ENCODE measurements at regions of chr6 and their contacts with region 1.

Region 1: GRCh38 chr6:134436281-134436815 is 118.4 kb upstream of the SGK1 start:
- DNase-seq: peak; percentile 75 to 96
- H3K4me3 ChIP-seq: peak overlapping the region; percentile 36; the same call in 1 of the 2 replicates
- H3K27ac ChIP-seq: peak overlapping the region; percentile 85
- H3K4me1 ChIP-seq: peaks cover 29% of the 10 kb centered on the region
- H3K27me3 ChIP-seq: no peaks in the 10 kb centered on the region
- CTCF ChIP-seq: no peak

Region 2: DNA sequence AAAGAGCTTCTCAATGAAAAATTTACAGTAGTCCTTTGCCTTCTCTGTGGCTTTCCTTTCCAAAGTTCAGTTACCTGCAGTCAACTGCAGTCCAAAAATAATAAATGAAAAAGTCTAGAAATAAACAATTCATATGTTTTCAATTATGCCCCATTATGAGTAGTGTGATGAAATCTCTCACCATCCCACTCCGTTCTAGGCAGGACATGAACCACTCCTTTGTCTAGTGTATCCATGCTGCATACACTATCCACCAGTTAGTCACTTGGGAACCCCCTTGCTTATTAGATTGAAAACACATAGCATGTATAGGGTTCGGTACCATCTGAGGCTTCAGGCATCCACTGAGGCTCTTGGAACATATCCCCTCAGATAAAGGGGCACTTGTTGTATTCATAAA is 1275.8 kb before region 1 on chr6:
- CTCF ChIA-PET with region 1: no interaction called
- POLR2A ChIA-PET with region 1: no interaction called
- intact Hi-C with region 1: no loop called
- DNase-seq: no peak
- H3K4me3 ChIP-seq: no peak overlapping the region
- H3K27ac ChIP-seq: no peak overlapping the region
- H3K4me1 ChIP-seq: no peaks in the 10 kb centered on the region
- H3K27me3 ChIP-seq: no peaks in the 10 kb centered on the region
- CTCF ChIP-seq: no peak

Region 3: GRCh38 chr6:134211297-134211696 is 225.1 kb before region 1 on chr6:
- CTCF ChIA-PET with region 1: no interaction called
- POLR2A ChIA-PET with region 1: no interaction called
- intact Hi-C with region 1: no loop called
- DNase-seq: no peak
- H3K4me3 ChIP-seq: no peak overlapping the region
- H3K27ac ChIP-seq: no peak overlapping the region
- H3K4me1 ChIP-seq: no peaks in the 10 kb centered on the region
- H3K27me3 ChIP-seq: no peaks in the 10 kb centered on the region
- CTCF ChIP-seq: no peak

Region 4: DNA sequence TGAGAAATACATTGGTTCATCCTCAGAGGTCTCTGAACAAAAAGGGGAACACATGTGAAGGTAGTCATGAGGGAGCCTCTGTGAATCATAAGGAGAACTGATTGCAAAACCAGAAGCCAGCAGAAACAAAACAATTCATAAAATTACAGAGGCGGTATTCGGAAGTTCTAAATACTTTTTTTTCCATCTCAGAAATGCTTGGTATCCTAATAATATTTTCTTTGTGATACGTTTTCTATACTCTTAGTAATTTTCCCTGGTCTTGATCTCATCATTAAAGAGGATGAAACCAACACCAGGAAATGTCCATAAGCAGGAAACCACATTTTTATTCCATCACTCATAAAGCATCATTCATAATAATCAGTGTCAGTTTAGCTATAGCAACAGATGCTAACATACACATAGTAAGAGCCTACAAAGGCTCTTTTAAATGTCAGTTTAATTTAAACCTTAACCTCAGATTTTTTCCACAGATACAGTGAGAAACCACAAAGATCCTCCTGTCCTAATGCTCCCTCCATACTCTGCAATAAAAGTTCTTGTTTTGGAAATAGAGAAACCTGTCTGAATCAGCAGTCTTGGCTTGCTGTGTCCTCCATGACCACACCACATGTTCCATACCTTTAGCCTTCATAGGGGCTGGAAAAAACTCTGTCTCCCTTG is 147.7 kb before region 1 on chr6:
- CTCF ChIA-PET with region 1: no interaction called
- POLR2A ChIA-PET with region 1: no interaction called
- intact Hi-C with region 1: loop called (anchors 2 kb)
- DNase-seq: peak in 1 of 2 experiments; percentile 99
- H3K4me3 ChIP-seq: no peak overlapping the region
- H3K27ac ChIP-seq: peak overlapping the region; percentile 87
- H3K4me1 ChIP-seq: peaks cover 29% of the 10 kb centered on the region
- H3K27me3 ChIP-seq: no peaks in the 10 kb centered on the region
- CTCF ChIP-seq: no peak

Region 5: DNA sequence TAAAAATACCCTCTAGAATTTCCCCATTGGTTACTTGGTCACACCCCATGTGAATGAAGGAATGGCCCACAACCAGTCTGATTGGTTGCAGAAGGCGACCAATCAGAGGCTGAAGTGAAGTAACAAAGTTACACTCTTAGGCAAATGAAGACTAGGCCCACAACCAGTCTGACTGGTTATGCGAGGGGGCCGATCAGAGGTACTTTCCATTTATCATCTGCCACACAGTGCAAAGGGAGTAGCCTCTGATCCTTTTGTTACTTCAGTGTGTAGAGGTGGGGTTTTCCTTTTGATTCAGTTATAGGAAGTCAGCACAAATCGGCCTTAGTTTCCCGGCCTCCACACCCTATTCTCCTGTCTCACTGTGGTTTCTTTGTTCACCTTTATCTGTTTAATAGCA is 57.3 kb before region 1 on chr6:
- CTCF ChIA-PET with region 1: no interaction called
- POLR2A ChIA-PET with region 1: no interaction called
- intact Hi-C with region 1: loop called (anchors 5 kb)
- DNase-seq: peak; percentile 78 to 93
- H3K4me3 ChIP-seq: peak overlapping the region; percentile 39
- H3K27ac ChIP-seq: peak overlapping the region; percentile 64
- H3K4me1 ChIP-seq: peaks cover 30% of the 10 kb centered on the region
- H3K27me3 ChIP-seq: no peaks in the 10 kb centered on the region
- CTCF ChIP-seq: no peak

Measured in PC-9 (cell line).